ENCODE measurements at regions of chr18 and their contacts with region 1.

Region 1: DNA sequence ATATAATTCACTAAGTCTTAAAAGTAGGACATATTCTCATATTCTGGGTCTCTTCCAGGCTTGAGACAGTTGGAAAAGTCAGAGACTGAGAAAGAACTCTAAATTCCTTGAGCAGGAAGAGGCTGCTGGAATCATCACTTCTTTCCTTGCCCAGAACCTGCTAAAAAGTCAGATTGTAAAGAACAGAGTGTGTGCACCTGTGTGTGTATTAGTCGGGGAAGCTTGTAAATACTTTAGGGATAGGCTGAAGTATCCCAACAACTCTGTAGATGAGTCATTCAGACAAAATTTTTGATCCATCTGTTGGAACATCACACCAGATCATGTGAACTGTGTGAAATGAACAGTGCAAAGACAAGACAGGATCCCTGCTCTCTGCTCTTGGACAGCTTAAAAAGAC is 16.1 kb downstream of the GAREM1 start:
- DNase-seq: no peak
- ATAC-seq: peak in 1 of 2 donors; percentile 8
- H3K4me3 ChIP-seq: no peak overlapping the region
- H3K27ac ChIP-seq: no peak overlapping the region
- H3K4me1 ChIP-seq: no peaks in the 10 kb centered on the region
- H3K27me3 ChIP-seq: no peaks in the 10 kb centered on the region
- CTCF ChIP-seq: no peak

Region 2: GRCh38 chr18:32289483-32290075 is 165.0 kb before region 1 on chr18:
- intact Hi-C with region 1: loop called (anchors 10 kb)
- DNase-seq: no peak
- ATAC-seq: peak; percentile 78 to 83
- H3K4me3 ChIP-seq: no peak overlapping the region
- H3K27ac ChIP-seq: no peak overlapping the region
- H3K4me1 ChIP-seq: no peaks in the 10 kb centered on the region
- H3K27me3 ChIP-seq: no peaks in the 10 kb centered on the region
- CTCF ChIP-seq: peak; percentile 65

Region 3: GRCh38 chr18:32317651-32318050 is 136.9 kb before region 1 on chr18:
- intact Hi-C with region 1: no loop called
- DNase-seq: no peak
- ATAC-seq: peak in 1 of 2 donors; percentile 76
- H3K4me3 ChIP-seq: no peak overlapping the region
- H3K27ac ChIP-seq: peak overlapping the region; percentile 37
- H3K4me1 ChIP-seq: peaks cover 12% of the 10 kb centered on the region
- H3K27me3 ChIP-seq: no peaks in the 10 kb centered on the region
- CTCF ChIP-seq: no peak

Measured in lower lobe of right lung (tissue), 2 donors.